Activated naive CD4-positive, alpha-beta T cell treated with anti-CD3 and anti-CD28 coated beads for 36 hours (primary cell): ENCODE measurements at regions of chr14 and their contacts with region 1.

Region 1: DNA sequence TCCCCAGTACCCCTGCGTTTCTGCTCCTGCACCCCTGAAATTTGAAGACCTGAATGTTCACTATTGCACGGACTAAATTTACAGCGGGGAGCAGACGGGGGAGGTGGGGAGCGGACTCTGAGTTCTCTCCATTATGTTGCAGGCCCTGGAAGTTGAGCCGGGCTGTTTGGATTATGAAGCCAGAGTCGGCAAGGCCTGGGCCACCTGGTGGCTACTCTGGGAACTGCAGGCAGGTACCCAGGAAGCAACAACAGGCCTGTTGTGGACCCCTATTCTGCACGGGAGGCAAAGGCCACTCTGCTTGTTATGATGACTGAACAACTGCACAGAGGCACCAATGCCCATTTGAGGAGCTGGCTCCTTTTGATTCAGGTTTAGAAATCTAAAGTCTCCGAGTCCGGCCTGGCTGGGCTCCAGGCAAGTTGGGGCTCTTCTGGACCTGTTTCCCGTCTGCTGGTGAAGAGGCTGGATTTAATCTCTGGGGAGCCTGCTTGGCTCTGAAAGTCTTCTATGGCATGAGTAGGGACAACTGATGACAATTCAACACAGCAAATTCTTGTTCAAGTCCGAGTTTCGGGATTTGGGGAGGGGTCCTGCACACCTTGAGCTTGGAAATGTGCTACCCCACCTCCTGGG is 34.1 kb upstream of the FAM181A start:
- DNase-seq: peak; percentile 78
- H3K4me3 Mint-ChIP-seq: no peak overlapping the region
- H3K27ac Mint-ChIP-seq: no peak overlapping the region
- H3K4me1 Mint-ChIP-seq: no peaks in the 10 kb centered on the region
- H3K27me3 Mint-ChIP-seq: peaks cover 21% of the 10 kb centered on the region

Region 2: GRCh38 chr14:93683226-93683625 is 209.8 kb before region 1 on chr14:
- CTCF ChIA-PET with region 1: no interaction called
- intact Hi-C with region 1: no loop called
- DNase-seq: no peak
- H3K4me3 Mint-ChIP-seq: no peak overlapping the region
- H3K27ac Mint-ChIP-seq: no peak overlapping the region
- H3K4me1 Mint-ChIP-seq: no peaks in the 10 kb centered on the region
- H3K27me3 Mint-ChIP-seq: peaks cover 20% of the 10 kb centered on the region

Region 3: DNA sequence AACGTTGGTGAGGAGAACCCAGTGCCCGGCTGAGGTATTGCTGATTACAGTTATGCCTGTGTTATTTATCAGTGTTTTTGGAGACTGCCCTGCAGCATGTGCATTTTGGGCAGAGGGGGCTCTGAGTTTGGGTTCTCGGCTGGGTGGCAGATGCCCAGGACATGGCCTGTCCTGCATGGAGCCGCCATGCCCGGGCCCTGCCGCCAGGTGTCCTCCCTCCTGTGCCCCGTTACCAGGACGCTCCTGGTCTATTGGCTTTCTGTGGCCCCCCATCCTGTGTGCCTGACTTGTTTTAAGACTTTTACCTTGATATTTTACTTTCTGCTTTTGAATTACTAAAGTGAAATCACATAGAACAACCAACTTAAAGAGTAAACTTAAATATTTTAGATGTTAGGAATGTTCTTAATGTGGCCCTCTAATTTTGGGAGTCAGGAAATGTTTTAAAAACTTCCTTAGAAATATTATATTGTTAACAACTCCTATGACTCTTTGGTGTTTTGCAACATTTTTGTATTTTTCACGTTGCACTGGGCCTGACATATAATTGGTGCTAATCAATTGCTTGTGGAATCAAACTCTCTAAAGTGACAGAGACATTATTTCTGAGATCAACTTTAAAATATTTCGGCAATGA is 156.5 kb before region 1 on chr14:
- CTCF ChIA-PET with region 1: no interaction called
- intact Hi-C with region 1: loop called (anchors 5 kb)
- DNase-seq: no peak
- H3K4me3 Mint-ChIP-seq: no peak overlapping the region
- H3K27ac Mint-ChIP-seq: no peak overlapping the region
- H3K4me1 Mint-ChIP-seq: no peaks in the 10 kb centered on the region
- H3K27me3 Mint-ChIP-seq: peaks cover 6% of the 10 kb centered on the region